Head of caudate nucleus (tissue), 42 donors: ENCODE measurements at regions of chr17 and their contacts with region 1.

Region 1: DNA sequence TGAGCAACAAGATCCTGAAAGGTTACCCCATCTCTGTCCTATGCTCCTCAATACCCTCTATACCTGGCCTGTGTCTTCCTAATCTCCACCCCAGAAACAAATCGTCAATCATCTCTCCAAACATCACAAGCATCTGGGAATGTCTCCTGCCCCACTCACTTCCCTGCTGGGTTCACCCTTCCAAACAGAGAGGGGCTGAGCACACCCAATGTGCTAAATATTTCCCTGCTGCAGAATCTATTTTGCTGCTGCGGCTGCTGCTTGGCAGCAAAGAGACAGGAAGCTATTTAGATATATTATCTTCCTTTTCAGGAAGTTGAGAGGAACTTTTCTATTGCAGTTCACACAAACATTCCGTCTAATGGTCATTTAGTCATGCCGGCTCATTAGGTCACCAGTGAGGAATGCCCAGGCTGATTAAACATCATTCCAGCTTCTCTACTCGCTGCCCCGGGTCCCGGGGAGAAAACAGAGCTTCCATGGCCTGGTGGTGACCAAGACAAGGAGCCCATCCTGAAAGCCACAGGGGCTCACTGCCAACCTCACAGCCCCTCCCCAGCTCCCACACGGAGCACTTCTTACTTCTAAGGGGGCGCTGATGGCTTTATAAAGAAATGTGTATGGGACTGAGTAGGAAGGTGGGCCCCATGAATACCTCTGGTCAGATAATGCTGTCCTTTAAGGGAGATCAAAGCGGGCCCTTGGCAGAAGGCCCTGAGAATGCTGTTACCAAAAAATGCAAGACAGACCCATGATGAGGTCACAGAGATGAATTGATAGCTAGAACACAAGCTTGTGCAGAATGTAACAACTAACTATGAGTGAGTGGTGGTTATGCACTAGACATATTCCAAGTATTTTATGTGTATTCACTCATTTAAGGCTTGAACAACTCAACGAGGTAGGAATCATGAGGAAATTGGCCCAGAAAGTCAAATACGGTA is 218.3 kb downstream of the SOX9 start:
- DNase-seq: no peak

Region 2: DNA sequence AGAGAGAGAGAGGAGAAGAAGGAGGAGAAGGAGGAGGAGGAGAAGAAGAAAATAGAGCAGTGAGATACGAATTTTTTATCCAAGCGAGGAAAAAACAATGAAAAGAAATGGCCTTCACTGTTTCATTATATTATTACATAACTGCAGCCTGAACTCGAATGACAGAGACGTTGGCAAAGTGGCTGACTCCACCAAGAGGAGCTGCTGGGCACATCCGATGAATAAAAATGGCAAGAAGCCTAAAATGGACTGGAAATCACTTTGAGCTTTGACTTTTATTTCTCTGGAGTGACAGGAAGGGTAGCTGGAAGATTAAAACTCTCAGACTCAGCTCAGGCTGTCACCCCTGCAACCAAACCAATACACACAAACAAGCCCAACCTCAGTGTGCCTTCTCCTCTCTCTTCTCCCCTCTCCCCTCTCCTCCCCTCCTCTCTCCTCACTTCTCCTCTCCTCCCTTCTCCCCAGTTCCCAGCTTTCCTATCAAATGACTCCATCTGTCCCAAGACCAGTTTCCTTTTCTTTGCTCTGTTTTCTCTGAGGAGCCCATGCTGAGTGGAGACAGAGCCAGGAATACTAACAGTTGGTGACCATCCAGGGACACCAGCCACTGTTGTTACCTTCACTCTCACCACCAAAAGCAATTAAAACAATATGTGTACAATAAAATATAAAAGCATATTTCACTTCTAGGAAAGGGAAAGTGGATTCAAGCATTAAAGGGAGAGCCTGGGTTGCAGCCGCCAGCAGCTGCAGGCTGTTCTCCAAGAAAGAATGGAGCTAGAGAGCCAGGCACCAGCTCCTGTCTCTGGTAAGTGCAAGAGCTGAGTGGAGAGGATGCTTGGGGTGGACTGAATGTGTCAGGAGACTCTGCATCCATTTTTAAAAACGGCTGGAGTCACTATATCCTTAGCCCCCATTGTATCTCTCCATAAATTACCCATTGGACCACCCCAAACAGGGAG is 167.1 kb before region 1 on chr17:
- intact Hi-C with region 1: loop called (anchors 10 kb)
- DNase-seq: peak in 35 of 42 donors; percentile 31 to 82 (median 58)

Region 3: DNA sequence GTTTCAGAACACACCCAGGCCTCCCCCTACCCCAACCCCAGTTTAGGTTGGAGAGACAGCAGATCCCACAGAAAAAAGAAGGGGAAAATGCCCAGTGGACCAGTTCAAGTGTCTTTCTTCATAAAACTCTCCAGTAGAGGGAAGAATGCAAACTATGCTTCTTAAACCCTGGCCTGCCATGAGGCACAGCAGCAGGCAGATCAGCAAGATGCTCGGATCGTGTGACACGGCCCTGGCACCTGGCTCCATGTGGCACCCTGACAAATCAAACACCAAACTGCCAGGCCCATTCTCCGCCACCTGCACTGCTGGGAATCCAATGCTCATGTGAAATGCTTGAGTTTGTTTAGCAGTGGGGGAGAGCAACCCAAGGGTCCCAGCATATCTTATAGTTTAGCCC is 51.5 kb before region 1 on chr17:
- intact Hi-C with region 1: loop called (anchors 10 kb)
- DNase-seq: no peak

Region 4: DNA sequence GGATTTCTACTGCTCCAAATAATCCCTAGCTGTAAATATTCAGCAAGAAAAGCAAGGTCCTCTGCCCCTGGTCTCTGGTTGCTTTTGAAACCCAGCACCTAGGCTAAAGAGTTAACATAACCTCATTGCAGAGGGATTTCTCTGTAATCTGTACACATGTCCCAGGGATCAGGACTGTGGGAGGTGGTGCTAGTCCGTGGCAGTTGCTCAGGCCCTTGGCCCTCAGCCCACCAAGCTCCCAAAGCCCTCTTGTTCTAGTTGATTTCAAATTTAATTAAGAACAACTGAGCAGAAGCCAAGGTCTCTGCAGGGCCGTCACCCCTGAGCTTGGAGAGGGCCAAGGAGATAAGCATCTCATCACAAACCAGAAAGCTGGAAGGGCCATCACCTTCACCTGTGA is 37.2 kb before region 1 on chr17:
- intact Hi-C with region 1: no loop called
- DNase-seq: peak in 8 of 42 donors; percentile 9 to 40 (median 20)